Left colon (tissue), 2 donors: ENCODE measurements at regions of chr4 and their contacts with region 1.

Region 1: DNA sequence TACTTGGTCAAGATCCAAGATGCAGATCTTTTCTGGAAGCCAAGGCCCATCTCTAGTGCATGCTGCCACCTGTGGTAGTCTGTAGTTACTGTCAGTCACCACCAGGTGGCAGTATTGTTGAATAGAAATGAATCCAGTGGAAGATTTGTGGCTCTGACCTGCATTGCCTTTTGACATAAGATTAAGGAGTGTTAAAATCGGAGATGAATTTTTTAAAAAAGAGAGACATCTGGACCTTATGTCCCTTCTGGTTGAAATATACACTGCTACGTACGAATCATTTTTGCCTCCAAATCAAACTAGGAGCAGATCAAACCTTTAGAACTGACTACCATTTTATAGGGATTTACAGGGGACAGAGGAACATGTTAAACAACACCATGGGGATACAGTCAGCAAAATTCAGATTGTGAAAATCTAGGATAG is 46.9 kb upstream of the RHOH start:
- DNase-seq: peak; percentile 34 to 61
- ATAC-seq: peak; percentile 83

Region 2: DNA sequence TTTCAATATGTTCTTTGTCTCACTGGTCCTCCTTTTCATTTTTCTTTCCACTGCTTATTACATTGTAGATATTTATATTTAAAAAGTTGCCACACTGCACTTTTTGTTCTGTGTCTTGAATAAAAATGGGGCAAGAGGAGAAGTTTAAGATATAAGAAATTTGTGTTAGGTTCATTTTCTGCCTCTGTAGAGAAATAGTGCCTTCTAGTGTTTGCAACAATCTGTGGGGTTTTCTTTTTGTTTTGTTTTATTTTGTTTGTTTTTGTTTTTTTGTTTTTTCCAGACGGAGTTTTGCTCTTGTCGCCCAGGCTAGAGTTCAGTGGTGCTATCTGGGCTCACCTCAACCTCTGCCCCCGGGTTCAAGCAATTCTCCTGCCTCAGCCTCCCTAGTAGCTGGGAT is 491.2 kb before region 1 on chr4:
- intact Hi-C with region 1: no loop called
- DNase-seq: no peak
- ATAC-seq: no peak

Region 3: DNA sequence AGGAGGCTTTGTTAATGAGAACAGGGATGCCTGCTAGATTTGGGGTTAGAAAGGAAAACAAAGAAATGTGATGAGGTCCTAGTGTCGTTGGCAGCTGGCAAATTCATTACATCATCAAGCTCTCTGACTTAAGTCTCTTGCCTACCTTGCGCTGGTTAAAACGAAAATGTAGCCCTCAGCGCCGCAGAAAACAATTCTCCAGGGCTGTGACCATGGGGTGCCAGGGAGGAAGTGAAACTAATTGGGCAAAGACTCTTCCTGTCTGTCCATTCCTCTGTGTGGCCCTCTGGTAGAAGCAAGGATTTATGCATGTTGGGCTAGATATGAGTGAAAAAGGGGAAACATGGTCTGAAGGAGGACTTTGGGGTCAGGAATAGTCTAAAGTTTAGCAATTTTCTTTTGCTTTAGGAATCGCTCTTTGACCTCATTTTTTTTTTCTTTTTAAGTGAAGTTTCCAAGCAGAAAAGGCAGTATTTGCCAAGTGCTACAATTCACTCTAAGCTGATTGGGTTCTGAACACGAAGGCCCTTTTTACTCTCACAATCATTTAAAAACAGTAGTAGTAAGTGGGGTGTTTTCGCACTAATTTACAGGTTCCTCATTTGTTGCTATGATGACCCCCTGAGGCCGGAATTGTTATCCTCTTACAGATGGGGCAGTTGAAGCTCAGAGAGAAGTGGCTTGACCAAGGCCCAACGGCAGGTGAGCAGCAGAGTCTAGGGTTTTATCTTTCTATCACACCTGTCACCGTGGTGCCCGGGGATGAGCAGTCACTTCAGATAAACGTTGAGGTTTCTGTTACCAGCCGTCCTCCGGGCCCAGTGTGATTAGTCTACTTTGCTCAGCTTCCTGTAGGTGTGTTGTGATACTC is 157.9 kb after region 1 on chr4:
- intact Hi-C with region 1: loop called in 1 of 2 experiments (anchors 2 kb)
- DNase-seq: peak; percentile 44 to 50
- ATAC-seq: peak; percentile 14